AG04449 (cell line): ENCODE measurements at regions of chr10 and their contacts with region 1.

Region 1: DNA sequence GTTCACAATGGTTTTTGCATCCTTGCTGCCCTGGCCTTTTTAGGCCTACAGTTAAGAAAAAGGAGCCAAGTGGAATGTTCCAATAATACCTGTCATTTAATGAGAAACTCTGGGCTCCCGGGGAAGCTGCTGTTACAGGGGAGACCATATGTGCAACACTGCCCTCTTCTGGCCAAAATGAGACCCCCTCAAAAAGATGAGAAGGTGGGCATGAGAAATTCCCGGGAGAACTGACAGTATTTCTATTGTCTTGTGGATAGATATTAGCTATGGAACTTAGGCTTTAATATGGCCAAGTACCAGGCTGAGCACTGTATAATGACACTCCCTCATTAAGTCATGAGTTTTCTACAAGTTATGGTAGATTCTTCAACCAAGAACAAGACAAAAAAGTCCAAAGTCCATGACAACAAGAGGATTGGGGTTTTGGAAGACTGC is 99.4 kb downstream of the CCDC3 start:
- DNase-seq: no peak
- H3K4me3 ChIP-seq: no peak overlapping the region
- CTCF ChIP-seq: peak; percentile 67

Region 2: DNA sequence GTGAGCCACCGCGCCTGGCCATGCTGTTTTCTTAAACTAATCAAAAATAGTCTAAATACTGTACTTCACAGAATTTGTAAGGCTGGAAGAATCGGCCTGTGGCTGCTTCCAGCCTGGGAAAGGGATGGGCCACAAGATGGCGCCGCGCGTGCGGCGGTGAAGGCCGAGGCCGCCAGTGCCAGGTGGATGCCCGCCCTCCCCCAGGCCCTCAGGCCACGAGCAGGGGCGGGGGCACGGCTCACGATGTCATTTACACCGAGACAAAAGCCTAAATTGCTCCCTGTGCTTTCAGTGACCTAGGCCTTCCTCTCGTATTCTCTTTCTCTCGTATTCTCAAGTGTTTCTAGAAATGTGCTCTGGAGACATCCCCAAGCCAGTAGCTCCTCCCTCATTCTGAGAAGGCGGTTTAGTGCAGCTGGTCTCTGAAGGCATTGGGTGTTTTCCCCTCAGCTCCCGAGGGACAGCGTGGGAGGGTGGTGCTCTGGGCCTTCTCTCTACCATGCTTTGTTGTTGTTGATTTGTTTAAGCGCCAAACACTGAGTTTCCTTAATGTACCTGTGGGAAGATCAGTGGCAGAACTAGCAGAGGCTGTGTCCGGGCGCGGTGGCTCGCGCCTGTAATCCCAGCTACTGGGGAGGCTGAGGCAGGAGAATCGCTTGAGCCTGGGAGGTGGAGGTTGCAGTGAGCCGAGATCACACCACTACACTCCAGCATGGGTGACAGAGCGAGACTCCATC is 637.8 kb before region 1 on chr10:
- CTCF ChIA-PET with region 1: interaction called, 18 read pairs
- POLR2A ChIA-PET with region 1: no interaction called
- DNase-seq: no peak
- H3K4me3 ChIP-seq: peak overlapping the region; percentile 53
- CTCF ChIP-seq: peak; percentile 89

Region 3: GRCh38 chr10:12720217-12720981 is 181.8 kb before region 1 on chr10:
- CTCF ChIA-PET with region 1: interaction called, 18 read pairs
- POLR2A ChIA-PET with region 1: no interaction called
- DNase-seq: peak; percentile 47
- H3K4me3 ChIP-seq: no peak overlapping the region
- CTCF ChIP-seq: no peak

Region 4: GRCh38 chr10:12839941-12840611 is 62.1 kb before region 1 on chr10:
- CTCF ChIA-PET with region 1: no interaction called
- POLR2A ChIA-PET with region 1: no interaction called
- DNase-seq: no peak
- H3K4me3 ChIP-seq: no peak overlapping the region
- CTCF ChIP-seq: no peak

Region 5: DNA sequence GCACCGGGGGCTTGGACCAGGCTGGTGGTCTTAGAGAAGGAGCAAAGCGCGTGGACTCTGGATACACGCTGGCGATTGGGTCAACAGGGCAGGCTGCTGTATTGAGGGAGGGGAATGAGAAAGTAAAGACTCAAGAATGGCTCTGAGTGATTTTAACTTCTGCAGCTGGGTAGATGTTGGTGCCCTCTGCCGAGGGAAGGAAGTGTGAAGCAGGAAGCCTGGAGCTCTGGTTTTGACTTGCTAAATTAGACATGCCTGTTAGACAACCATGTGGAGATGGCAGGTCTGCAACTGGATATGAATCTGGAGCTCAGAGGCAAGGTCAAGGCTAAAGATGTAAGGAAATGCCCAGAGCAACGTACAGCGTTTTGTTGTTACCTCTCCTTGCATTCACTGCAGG is 17.8 kb before region 1 on chr10:
- CTCF ChIA-PET with region 1: interaction called, 28 read pairs
- POLR2A ChIA-PET with region 1: no interaction called
- DNase-seq: no peak
- H3K4me3 ChIP-seq: no peak overlapping the region
- CTCF ChIP-seq: no peak

Region 6: DNA sequence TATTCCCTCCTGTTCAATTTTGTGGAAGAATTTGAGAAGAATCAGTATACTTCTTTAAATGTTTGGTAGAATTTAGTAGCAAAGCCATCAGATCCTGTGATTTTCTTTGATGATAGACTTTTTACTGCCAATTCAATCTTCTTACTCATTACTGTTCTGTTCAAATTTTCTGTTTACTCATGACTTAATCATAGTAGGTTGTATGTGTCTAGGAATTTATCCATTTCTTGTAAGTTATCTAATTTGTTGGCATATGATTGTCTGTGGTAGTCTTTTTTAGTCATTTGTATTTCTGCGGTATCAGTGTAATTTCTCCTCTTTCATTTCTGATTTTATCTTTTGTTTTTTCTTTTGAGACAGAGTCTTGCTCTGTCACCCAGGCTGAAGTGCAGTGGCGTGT is 12.0 kb after region 1 on chr10:
- CTCF ChIA-PET with region 1: interaction called, 14 read pairs
- POLR2A ChIA-PET with region 1: no interaction called
- DNase-seq: no peak
- H3K4me3 ChIP-seq: no peak overlapping the region
- CTCF ChIP-seq: no peak

Region 7: DNA sequence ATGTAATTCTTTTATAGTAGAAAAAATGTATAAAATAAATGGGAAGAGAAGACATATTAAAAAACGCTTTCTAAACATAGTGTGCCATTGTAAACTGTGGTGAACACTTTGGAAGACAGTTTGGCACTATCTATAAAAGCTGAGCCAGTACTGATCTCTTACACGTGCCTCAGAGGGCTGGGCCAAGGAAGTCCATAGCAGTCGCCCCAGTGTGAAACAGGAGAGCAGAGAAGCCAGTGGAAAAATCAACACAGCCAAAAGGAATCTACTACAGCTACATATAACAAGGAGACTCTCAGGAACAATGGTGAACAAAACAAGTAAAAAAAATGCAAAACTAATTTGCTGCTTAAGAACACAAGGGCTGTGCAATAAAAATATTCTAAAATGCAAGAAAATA is 425.4 kb after region 1 on chr10:
- CTCF ChIA-PET with region 1: no interaction called
- POLR2A ChIA-PET with region 1: no interaction called
- DNase-seq: no peak
- H3K4me3 ChIP-seq: no peak overlapping the region
- CTCF ChIP-seq: no peak